AG04449 (cell line): ENCODE measurements at regions of chr15 and their contacts with region 1.

Region 1: DNA sequence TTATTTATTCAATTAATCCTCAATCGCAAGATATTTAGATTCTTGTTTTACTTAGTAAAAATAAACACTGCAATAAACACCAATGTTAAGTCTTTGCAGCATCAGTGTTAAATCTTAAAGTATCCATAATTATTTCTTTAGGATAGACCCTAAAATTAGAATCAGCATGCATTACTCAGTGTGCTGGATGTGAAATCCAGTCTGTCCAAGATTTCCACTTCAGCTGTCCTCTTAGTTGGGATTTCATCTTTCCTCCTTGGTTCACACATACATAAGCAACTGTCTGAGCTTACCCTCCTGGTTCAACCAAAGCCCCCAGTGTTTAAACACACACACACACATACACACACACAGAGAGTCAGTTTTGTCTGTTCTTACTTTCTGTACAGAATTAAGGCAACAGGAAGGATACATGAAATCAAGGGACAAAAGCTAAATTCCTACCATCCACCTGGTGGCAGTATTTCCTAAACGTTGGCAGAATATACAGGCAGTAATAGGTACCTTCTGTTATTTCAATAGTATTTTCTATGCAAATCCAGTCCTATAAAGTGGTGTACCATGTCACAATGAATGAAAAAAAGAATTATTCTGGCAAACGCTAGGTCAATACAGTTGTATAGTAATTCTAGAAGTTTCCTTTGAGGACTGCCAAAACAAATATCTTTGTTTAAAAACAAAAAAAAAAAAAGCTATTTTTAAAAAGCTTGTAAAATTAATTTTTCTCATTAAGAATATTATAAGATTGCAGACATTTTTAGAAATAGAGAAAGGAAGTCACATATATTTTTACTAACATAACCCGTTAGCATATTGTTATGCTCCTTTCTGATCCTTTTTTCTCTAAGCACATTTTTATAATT is 27.3 kb upstream of the DMXL2 start:
- DNase-seq: peak; percentile 9
- H3K4me3 ChIP-seq: no peak overlapping the region
- CTCF ChIP-seq: peak; percentile 67

Region 2: DNA sequence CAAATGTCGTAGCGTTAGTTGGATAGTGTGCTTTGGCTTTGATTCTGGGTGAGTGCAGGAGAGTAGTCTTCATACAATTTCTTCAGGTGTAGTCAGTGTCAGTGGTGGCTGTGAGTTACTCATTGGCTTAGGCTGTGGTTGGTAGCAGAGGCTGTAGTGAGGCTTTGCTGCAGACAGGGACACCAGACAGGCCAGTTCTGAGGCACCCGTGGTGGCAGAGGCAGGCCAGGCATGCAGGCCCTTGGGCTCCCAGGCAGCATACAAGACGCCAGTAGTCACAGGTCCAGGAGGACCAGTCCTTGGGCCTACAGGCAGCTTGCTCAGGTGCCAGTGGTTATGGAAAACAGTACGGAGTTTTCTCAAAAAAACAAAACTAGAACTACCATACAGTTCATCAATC is 88.6 kb before region 1 on chr15:
- CTCF ChIA-PET with region 1: no interaction called
- POLR2A ChIA-PET with region 1: no interaction called
- DNase-seq: no peak
- H3K4me3 ChIP-seq: no peak overlapping the region
- CTCF ChIP-seq: no peak

Region 3: DNA sequence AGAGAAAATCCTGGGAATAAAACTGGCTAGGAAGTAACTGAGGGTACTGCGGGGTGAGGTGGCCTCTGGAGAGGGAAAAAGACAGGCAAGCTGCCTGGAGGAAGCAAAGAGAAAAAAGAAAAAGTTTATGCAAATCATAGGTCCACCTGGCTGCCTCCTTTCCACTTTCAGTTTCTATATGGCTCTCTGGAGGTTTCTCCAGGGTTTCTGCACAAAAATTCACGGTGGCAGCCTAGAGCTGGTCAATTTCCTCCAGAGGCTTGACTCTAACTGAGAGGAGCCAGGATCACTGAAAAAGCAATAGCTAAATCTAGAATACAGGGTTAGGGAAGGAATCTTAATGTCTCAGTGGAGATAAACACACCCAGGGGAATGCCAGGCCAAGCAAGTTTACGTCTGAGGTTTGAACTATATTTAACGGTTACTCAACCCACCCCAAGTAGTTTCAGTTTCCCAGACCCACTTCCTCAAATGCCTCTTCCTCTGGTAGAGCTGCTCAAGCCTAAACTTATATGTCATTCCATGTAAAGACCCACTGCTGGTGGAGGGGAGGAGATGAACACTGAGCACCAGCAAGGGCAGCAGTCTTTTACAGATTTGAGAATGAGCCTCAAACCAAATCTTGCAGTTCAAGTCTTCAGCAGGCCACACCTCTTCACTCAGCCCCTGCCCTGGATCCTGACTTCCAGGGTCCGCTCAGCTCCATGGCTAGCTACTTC is 81.8 kb after region 1 on chr15:
- CTCF ChIA-PET with region 1: interaction called, 13 read pairs
- POLR2A ChIA-PET with region 1: no interaction called
- DNase-seq: peak; percentile 47
- H3K4me3 ChIP-seq: no peak overlapping the region
- CTCF ChIP-seq: no peak

Region 4: GRCh38 chr15:51759557-51760070 is 109.7 kb after region 1 on chr15:
- CTCF ChIA-PET with region 1: interaction called, 14 read pairs
- POLR2A ChIA-PET with region 1: no interaction called
- DNase-seq: peak; percentile 88
- H3K4me3 ChIP-seq: no peak overlapping the region
- CTCF ChIP-seq: peak; percentile 19

Region 5: DNA sequence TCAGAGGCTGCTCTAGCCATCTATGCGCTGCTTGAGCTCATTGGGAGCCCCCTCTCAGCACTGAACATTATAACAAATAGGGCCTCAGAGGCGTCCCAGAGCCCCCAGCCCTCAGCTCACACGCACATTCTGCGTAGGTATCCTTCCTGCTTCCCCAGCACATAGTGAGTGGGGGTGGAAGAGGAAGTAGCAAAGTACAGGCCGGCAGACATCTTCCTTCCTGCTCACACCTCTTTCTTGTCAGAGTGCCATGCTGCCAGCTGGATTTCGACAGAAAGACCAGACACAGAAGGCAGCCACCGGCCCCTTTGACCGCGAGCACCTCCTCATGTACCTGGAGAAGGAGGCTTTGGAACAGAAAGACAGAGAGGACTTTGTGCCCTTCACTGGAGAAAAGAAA is 118.1 kb after region 1 on chr15:
- CTCF ChIA-PET with region 1: interaction called, 511 read pairs
- POLR2A ChIA-PET with region 1: no interaction called
- DNase-seq: no peak
- H3K4me3 ChIP-seq: no peak overlapping the region
- CTCF ChIP-seq: no peak

Region 6: DNA sequence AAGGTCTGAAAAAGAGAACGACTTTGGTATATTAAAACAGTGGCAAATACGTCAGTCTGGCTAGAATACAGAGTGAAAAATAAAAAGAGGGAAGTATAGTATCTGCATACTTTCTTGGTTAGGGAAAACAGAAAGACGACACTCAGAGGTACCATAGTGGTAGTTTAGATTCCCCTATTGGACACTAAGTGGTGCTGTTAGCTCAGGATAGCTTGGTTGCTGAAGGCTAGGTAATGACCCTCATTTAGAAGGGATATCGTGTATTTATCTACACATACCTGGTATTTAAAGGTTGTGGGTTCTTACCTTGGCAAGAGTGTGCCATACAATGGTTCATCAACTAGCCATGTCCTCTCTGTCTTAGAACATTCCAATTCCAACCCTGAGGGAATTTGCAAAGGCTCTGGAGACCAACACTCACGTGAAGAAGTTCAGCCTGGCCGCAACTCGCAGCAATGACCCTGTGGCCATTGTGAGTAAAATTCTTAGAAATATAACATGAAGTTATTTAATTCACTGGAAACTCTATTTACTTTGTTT is 132.5 kb after region 1 on chr15:
- CTCF ChIA-PET with region 1: interaction called, 511 read pairs
- POLR2A ChIA-PET with region 1: no interaction called
- DNase-seq: no peak
- H3K4me3 ChIP-seq: no peak overlapping the region
- CTCF ChIP-seq: peak; percentile 3